Activated CD4-positive, alpha-beta memory T cell treated with anti-CD3 and anti-CD28 coated beads for 36 hours (primary cell): ENCODE measurements at regions of chr7 and their contacts with region 1.

Region 1: GRCh38 chr7:75914730-75915585 is at the start of gene POR:
- DNase-seq: peak; percentile 97
- H3K4me3 Mint-ChIP-seq: peak within 1 kb of the TSS; percentile 82
- H3K27ac Mint-ChIP-seq: peak within 1 kb of the TSS; percentile 87
- H3K4me1 Mint-ChIP-seq: peaks cover 27% of the 10 kb centered on the region
- H3K27me3 Mint-ChIP-seq: no peaks in the 10 kb centered on the region
- total RNA-seq, gene POR: 28.9 to 35.2 TPM

Region 2: GRCh38 chr7:75866489-75867389 is 48.2 kb before region 1 on chr7:
- CTCF ChIA-PET with region 1: interaction called, 5 read pairs
- POLR2A ChIA-PET with region 1: no interaction called
- intact Hi-C with region 1: loop called (anchors 2 kb)
- DNase-seq: peak; percentile 64
- H3K4me3 Mint-ChIP-seq: no peak overlapping the region
- H3K27ac Mint-ChIP-seq: no peak overlapping the region
- H3K4me1 Mint-ChIP-seq: peaks cover 22% of the 10 kb centered on the region
- H3K27me3 Mint-ChIP-seq: peaks cover 8% of the 10 kb centered on the region

Region 3: DNA sequence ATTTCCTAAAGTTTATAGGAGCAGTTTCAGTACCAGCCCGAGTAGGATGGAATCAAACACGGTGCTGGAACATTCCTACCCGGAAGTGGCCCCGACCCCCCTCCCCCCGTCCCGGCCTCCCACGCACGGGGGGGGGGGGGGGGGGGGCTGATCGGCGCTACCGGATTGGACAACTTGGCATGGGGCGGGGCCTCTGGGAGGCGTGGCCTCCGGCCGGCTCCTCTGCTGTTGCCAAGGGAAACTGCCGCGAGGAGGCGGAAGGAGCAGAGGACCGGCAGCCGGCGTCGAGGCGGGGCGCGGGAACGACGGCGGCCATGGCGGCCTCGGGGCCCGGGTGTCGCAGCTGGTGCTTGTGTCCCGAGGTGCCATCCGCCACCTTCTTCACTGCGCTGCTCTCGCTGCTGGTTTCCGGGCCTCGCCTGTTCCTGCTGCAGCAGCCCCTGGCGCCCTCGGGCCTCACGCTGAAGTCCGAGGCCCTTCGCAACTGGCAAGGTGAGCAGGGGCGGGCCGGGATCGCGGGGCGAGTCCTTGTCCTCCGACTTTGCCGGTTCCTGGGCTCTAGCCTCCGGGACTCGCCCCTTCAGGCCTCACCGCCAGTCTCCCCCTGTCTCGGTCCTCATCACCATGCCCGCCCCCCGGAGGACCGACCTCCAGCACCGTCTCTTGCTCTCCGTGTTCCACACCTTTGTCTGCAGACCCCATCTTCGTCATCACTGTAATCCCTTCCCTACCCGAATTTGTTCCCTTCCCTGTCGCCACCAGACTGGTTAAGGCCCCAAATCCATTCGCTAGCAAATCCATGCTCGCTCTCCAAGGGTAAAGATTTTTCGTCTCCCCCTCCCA is 36.0 kb before region 1 on chr7 and contains the start of gene RHBDD2:
- CTCF ChIA-PET with region 1: interaction called, 3 read pairs
- POLR2A ChIA-PET with region 1: interaction called, 4 read pairs
- intact Hi-C with region 1: loop called (anchors 1 kb)
- DNase-seq: peak; percentile 98
- H3K4me3 Mint-ChIP-seq: peak within 1 kb of the TSS; percentile 96
- H3K27ac Mint-ChIP-seq: peak within 1 kb of the TSS; percentile 90
- H3K4me1 Mint-ChIP-seq: peaks cover 29% of the 10 kb centered on the region
- H3K27me3 Mint-ChIP-seq: no peaks in the 10 kb centered on the region
- total RNA-seq, gene RHBDD2: 30.1 to 31.9 TPM

Region 4: DNA sequence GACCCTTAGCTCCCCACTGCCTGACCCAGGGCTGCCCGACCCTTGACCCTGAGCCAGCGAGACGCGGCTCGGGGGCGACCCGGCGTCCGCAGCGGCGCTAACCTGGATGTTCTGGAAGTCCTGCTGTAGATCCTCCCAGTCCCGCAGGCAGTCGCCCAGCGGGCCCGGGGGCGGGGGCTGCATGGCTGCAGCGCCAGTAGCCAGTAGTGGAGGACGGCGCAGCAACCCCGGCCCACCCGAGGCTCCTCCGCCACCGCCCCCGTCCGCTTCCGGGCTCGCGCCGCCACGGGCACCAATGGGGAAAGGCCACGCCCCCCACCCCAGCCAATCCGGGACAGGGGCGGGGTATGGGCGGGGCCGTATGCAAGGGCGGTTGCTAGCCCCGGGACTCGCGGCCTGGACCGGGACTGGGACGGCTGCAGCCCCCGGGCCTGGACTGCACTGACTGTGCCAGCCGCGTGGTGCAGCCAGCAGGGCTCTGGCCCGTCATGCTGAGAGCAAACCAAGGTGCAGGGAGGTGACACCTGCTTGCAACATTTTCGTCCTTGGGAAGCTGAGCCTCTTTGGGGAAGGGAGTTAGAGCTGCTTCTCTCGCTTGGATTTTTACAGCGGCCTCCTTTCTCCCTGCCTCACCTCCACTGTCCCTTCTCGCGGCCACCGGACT is 79.6 kb after region 1 on chr7 and contains the start of gene TMEM120A:
- CTCF ChIA-PET with region 1: no interaction called
- POLR2A ChIA-PET with region 1: no interaction called
- intact Hi-C with region 1: loop called (anchors 1 kb)
- DNase-seq: peak; percentile 95
- H3K4me3 Mint-ChIP-seq: peak within 1 kb of the TSS; percentile 64
- H3K27ac Mint-ChIP-seq: no peak within 1 kb of the TSS
- H3K4me1 Mint-ChIP-seq: peaks cover 31% of the 10 kb centered on the region
- H3K27me3 Mint-ChIP-seq: no peaks in the 10 kb centered on the region
- total RNA-seq, gene TMEM120A: 24.2 to 25.8 TPM

Region 5: GRCh38 chr7:76047811-76048667 is 133.1 kb after region 1 on chr7 and contains the starts of genes MDH2 and STYXL1:
- CTCF ChIA-PET with region 1: no interaction called
- POLR2A ChIA-PET with region 1: no interaction called
- intact Hi-C with region 1: loop called (anchors 2 kb)
- DNase-seq: peak; percentile 96
- H3K4me3 Mint-ChIP-seq: peak within 1 kb of the TSS; percentile 92
- H3K27ac Mint-ChIP-seq: peak within 1 kb of the TSS; percentile 90
- H3K4me1 Mint-ChIP-seq: peaks cover 42% of the 10 kb centered on the region
- H3K27me3 Mint-ChIP-seq: no peaks in the 10 kb centered on the region
- total RNA-seq, gene MDH2: 259 to 271 TPM
- total RNA-seq, gene STYXL1: 37.8 to 40.5 TPM